ENCODE measurements at regions of chr11 and their contacts with region 1.

Region 1: GRCh38 chr11:61947486-61948210 is 2.5 kb upstream of the BEST1 start:
- DNase-seq: peak; percentile 80
- H3K4me3 Mint-ChIP-seq: no peak overlapping the region
- H3K27ac Mint-ChIP-seq: no peak overlapping the region
- H3K4me1 Mint-ChIP-seq: peaks cover 27% of the 10 kb centered on the region
- H3K27me3 Mint-ChIP-seq: peaks cover 46% of the 10 kb centered on the region
- CTCF ChIP-seq: peak; percentile 78

Region 2: GRCh38 chr11:60906132-60906972 is 1041.3 kb before region 1 on chr11 and contains the start of gene PRPF19:
- CTCF ChIA-PET with region 1: interaction called, 10 read pairs
- intact Hi-C with region 1: no loop called
- DNase-seq: peak; percentile 97
- H3K4me3 Mint-ChIP-seq: peak within 1 kb of the TSS; percentile 98
- H3K27ac Mint-ChIP-seq: peak within 1 kb of the TSS; percentile 41
- H3K4me1 Mint-ChIP-seq: peaks cover 21% of the 10 kb centered on the region
- H3K27me3 Mint-ChIP-seq: peaks cover 38% of the 10 kb centered on the region
- CTCF ChIP-seq: no peak
- total RNA-seq, gene PRPF19: 128 and 129 TPM in 2 replicates

Region 3: DNA sequence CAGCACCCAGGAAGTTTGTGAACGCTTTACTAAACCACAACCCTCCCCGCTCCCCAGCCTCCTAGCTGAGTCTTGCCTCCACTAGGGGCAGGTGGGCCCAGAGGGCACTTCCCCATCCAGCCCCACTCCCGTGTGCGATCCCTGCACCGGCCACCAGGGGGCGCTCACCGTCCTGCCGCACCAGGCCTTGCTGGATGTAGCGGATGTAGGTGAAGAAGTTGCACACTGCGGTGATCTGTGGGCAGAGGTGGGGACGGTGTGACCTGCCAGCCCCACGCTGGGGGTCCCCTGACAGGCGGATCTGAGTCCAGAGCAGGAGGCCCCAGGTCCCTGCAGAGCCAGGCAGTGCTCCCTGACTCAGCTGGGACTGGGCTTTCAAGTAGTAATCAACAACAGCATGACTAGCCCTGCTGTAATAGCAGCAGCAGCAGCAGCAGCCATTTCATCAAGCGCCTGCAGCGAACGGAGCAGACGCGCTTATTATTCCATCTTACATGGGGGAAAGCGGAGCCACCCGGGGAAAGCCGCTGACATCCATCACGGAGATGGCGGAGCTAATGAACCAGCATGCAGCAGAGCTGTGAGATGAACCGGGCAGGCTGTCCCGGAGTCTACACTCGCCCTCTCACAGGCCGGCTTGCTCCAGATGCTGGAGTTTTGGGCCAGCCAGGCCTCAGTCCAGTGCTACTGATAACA is 48.4 kb before region 1 on chr11:
- CTCF ChIA-PET with region 1: interaction called, 96 read pairs
- intact Hi-C with region 1: loop called (anchors 1 kb)
- DNase-seq: peak; percentile 95
- H3K4me3 Mint-ChIP-seq: no peak overlapping the region
- H3K27ac Mint-ChIP-seq: peak overlapping the region; percentile 37
- H3K4me1 Mint-ChIP-seq: no peaks in the 10 kb centered on the region
- H3K27me3 Mint-ChIP-seq: peaks cover 45% of the 10 kb centered on the region
- CTCF ChIP-seq: peak; percentile 99

Region 4: DNA sequence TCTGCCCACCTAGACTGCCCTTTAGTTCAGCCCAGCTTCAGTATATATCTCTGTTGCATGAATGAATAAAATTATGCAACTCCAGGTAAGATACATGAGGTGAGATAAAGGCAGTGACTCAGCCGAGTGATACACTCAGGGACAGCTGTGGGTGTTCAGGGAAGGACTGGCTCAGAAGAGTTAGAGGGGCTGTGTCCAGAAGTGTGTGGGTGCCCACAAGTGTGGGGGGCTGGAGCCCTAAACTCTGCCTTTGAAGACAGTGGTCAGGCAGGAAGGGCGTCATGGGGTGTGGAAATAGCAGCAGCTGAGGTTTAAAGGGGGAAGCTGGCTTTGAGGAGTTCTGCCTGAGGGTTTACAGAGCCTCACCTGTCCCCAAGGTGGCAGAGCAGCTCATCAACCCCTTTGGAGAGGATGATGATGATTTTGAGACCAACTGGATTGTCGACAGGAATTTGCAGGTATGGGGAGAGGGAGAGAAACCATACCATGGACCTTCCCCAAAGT is 11.5 kb after region 1 on chr11:
- CTCF ChIA-PET with region 1: interaction called, 12 read pairs
- intact Hi-C with region 1: no loop called
- DNase-seq: no peak
- H3K4me3 Mint-ChIP-seq: no peak overlapping the region
- H3K27ac Mint-ChIP-seq: peak overlapping the region; percentile 82
- H3K4me1 Mint-ChIP-seq: peaks cover 42% of the 10 kb centered on the region
- H3K27me3 Mint-ChIP-seq: no peaks in the 10 kb centered on the region
- CTCF ChIP-seq: no peak

Region 5: DNA sequence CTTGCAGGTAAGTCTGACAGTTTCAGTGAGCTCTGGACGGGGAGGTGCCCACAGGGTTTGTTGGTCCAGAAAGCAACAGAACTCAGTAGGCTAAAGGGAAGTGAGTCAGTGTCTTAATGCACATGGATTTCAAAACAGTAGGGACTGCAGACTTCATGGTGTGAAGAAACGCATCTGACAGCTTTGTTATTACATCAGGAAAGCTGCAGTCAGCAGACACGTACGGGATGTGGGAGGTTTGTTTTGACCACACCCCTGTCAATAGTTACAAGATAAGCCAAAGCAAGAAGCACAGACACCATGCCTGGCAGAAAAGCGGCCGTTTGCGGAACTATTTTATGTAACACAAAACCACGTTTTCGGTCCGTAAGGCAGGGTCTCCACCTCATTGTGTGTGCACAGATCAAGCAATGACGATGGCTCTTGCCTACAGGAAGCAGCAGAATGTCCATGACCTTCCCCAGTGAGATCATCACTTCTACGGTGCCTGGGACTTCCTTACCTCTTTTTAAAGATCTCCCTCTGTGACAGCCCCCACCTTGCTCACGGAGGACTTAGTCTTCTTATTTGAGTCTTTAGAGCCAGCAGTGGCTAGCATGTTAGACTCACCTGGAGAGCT is 77.9 kb after region 1 on chr11:
- CTCF ChIA-PET with region 1: interaction called, 12 read pairs
- intact Hi-C with region 1: no loop called
- DNase-seq: peak; percentile 51
- H3K4me3 Mint-ChIP-seq: peak overlapping the region; percentile 40
- H3K27ac Mint-ChIP-seq: peak overlapping the region; percentile 67
- H3K4me1 Mint-ChIP-seq: peaks cover 11% of the 10 kb centered on the region
- H3K27me3 Mint-ChIP-seq: no peaks in the 10 kb centered on the region
- CTCF ChIP-seq: no peak

Region 6: DNA sequence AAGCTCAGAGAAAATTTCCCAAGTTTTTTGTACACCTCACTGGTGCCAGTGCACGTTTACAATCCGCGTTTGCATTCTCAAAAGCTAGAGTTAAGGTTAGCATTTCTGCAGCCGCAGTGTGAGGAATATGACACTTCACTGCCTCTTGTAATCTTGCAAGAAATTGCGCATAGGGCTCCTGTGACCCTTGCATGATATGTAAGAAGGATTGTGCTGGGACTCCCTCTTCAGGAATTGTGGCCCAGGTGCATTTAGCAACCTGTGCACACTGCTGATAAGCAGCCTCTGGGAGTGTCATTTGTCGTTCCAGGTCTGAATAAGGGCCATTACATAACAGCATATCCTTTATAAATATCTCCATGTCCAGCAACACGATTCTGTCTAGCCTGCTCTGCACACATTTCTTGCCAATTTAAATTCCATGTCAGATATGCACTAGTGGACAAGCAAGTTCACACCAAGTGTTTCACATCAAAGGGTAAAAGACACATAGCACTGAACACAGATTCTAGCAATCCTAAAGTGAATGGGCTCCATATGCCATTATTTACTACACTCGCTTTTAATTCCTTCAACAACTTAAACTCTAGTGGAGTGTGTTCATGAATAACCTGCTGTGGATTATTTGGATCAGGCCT is 107.0 kb after region 1 on chr11:
- CTCF ChIA-PET with region 1: interaction called, 11 read pairs
- intact Hi-C with region 1: loop called (anchors 5 kb)
- DNase-seq: peak; percentile 66
- H3K4me3 Mint-ChIP-seq: peak overlapping the region; percentile 8
- H3K27ac Mint-ChIP-seq: no peak overlapping the region
- H3K4me1 Mint-ChIP-seq: peaks cover 16% of the 10 kb centered on the region
- H3K27me3 Mint-ChIP-seq: no peaks in the 10 kb centered on the region
- CTCF ChIP-seq: peak; percentile 62

Region 7: GRCh38 chr11:62081378-62082291 is 134.0 kb after region 1 on chr11:
- CTCF ChIA-PET with region 1: interaction called, 39 read pairs
- intact Hi-C with region 1: no loop called
- DNase-seq: peak; percentile 87
- H3K4me3 Mint-ChIP-seq: no peak overlapping the region
- H3K27ac Mint-ChIP-seq: no peak overlapping the region
- H3K4me1 Mint-ChIP-seq: no peaks in the 10 kb centered on the region
- H3K27me3 Mint-ChIP-seq: no peaks in the 10 kb centered on the region
- CTCF ChIP-seq: peak; percentile 90

Measured in Calu3 (cell line).